IMR-90 (cell line): ENCODE measurements at regions of chr21 and their contacts with region 1.

Region 1: GRCh38 chr21:26952374-26953066 is 14.4 kb downstream of the ADAMTS5 start:
- DNase-seq: peak; percentile 45
- ATAC-seq: peak; percentile 63
- H3K4me3 ChIP-seq: no peak overlapping the region
- H3K27ac ChIP-seq: no peak overlapping the region
- H3K4me1 ChIP-seq: no peaks in the 10 kb centered on the region
- H3K27me3 ChIP-seq: no peaks in the 10 kb centered on the region
- CTCF ChIP-seq: no peak
- POLR2A ChIP-seq: no peak
- RAD21 ChIP-seq: no peak

Region 2: DNA sequence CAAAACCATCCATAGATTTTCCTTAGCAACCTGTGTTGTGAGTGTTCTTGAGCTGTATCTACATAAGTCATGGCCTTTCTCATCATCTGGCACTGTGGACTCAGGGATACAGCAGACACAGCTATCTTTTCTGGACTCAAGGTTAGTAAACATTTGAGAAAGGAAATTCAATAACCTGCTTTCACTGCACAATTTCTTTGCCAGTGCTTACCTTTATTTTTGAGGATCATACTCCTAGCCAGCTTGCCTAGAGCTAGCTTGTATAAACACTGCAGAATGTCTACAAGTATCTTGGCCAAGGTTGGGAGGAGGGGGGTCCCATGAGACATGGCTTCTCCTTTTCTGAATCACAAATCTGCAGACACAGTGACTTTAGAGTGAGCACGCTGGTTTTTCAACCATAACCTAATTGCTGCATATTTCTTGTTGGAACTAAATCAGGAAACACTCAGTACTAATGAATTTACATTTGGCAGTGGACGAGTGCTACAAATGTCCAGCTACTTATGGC is 12.9 kb before region 1 on chr21:
- CTCF ChIA-PET with region 1: no interaction called
- POLR2A ChIA-PET with region 1: no interaction called
- dilution Hi-C with region 1: no loop called
- in situ Hi-C with region 1: no loop called
- intact Hi-C with region 1: no loop called
- DNase-seq: peak; percentile 65
- ATAC-seq: peak; percentile 81
- H3K4me3 ChIP-seq: no peak overlapping the region
- H3K27ac ChIP-seq: no peak overlapping the region
- H3K4me1 ChIP-seq: peaks cover 7% of the 10 kb centered on the region
- H3K27me3 ChIP-seq: no peaks in the 10 kb centered on the region
- CTCF ChIP-seq: no peak
- POLR2A ChIP-seq: no peak
- RAD21 ChIP-seq: no peak

Region 3: GRCh38 chr21:26967062-26967913 is 14.8 kb after region 1 on chr21 and contains the start of gene ADAMTS5:
- CTCF ChIA-PET with region 1: no interaction called
- POLR2A ChIA-PET with region 1: no interaction called
- dilution Hi-C with region 1: no loop called
- in situ Hi-C with region 1: no loop called
- intact Hi-C with region 1: no loop called
- DNase-seq: peak; percentile 69
- ATAC-seq: peak; percentile 61
- H3K4me3 ChIP-seq: peak within 1 kb of the TSS; percentile 65
- H3K27ac ChIP-seq: peak within 1 kb of the TSS; percentile 80
- H3K4me1 ChIP-seq: no peaks in the 10 kb centered on the region; the same call in 1 of the 2 replicates
- H3K27me3 ChIP-seq: no peaks in the 10 kb centered on the region
- CTCF ChIP-seq: 0 out of 2 replicates have a peak, but pooled peaks have one; percentile 4
- POLR2A ChIP-seq: peak; percentile 65
- RAD21 ChIP-seq: no peak; the same call in 1 of the 2 replicates
- total RNA-seq, gene ADAMTS5: 0.54 and 1.1 TPM in 2 replicates

Region 4: GRCh38 chr21:27158967-27159366 is 206.4 kb after region 1 on chr21:
- CTCF ChIA-PET with region 1: no interaction called
- POLR2A ChIA-PET with region 1: interaction called, 17 read pairs
- dilution Hi-C with region 1: no loop called
- in situ Hi-C with region 1: no loop called
- intact Hi-C with region 1: no loop called
- DNase-seq: no peak
- ATAC-seq: no peak
- H3K4me3 ChIP-seq: no peak overlapping the region
- H3K27ac ChIP-seq: no peak overlapping the region
- H3K4me1 ChIP-seq: no peaks in the 10 kb centered on the region
- H3K27me3 ChIP-seq: no peaks in the 10 kb centered on the region
- CTCF ChIP-seq: no peak
- POLR2A ChIP-seq: no peak
- RAD21 ChIP-seq: no peak